ENCODE measurements at regions of chr18 and their contacts with region 1.

Region 1: DNA sequence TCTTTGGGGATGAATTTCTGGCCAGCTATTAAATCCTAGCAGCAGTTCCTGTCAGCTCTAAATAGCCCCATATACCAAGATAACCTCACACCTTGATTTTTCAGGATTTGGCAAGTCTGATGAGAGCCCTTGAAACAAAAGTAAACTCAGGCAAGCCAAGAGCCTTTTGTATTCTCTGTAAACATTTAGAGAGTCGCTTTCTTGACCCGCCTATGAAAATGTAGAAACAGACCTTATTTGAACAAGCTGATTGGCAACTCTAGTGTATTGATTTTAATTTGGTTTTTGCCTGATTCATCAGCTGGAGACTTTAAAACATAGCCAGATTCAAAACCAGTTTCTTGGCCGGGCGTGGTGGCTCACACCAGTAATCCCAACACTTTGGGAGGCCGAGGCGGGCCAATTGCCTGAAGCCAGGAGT is 43.4 kb downstream of the CABLES1 start:
- DNase-seq: no peak
- H3K4me3 ChIP-seq: no peak overlapping the region
- H3K27ac ChIP-seq: no peak overlapping the region
- H3K4me1 ChIP-seq: no peaks in the 10 kb centered on the region
- H3K27me3 ChIP-seq: no peaks in the 10 kb centered on the region
- CTCF ChIP-seq: no peak

Region 2: DNA sequence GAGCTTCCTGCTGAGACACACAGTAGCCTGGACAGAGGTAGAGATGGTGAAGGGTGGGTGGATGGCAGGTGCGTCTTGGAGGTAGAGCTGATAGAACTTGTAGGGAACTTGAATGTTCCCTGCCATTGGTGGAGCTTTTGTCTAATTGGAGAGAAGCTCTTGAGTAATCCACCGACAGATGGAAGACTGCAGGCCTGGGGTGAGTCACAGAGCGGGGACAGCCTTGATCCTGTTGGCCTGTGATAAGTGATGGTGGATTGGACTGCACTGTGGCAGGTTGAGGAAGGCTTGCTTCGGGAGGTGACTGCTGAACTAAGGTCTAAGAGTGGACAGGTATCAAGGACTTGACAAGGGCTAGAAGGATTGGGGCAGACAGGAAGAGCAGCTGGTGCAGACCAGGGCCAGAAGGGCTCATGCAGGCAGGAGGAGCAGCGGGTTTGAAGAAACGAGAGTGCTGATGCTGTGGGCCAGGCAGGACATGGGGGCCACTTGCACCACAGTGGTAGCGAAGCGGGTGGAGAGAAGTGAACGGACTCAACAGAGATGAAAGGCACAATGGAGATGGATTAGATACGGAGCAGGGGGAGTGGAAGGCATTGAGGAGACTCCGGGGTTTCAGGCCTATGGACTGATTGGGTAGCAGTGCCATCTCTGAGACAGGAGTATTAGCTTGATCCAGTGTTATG is 27.1 kb before region 1 on chr18:
- CTCF ChIA-PET with region 1: no interaction called
- POLR2A ChIA-PET with region 1: no interaction called
- intact Hi-C with region 1: no loop called
- DNase-seq: no peak
- H3K4me3 ChIP-seq: no peak overlapping the region
- H3K27ac ChIP-seq: no peak overlapping the region
- H3K4me1 ChIP-seq: peaks cover 13% of the 10 kb centered on the region
- H3K27me3 ChIP-seq: no peaks in the 10 kb centered on the region
- CTCF ChIP-seq: no peak

Region 3: GRCh38 chr18:23166891-23167541 is 11.7 kb before region 1 on chr18:
- CTCF ChIA-PET with region 1: interaction called, 19 read pairs
- POLR2A ChIA-PET with region 1: no interaction called
- intact Hi-C with region 1: no loop called
- DNase-seq: no peak
- H3K4me3 ChIP-seq: no peak overlapping the region
- H3K27ac ChIP-seq: no peak overlapping the region
- H3K4me1 ChIP-seq: no peaks in the 10 kb centered on the region
- H3K27me3 ChIP-seq: no peaks in the 10 kb centered on the region
- CTCF ChIP-seq: no peak

Measured in PC-9 (cell line).